ENCODE measurements at regions of chr14 and their contacts with region 1.

Region 1: DNA sequence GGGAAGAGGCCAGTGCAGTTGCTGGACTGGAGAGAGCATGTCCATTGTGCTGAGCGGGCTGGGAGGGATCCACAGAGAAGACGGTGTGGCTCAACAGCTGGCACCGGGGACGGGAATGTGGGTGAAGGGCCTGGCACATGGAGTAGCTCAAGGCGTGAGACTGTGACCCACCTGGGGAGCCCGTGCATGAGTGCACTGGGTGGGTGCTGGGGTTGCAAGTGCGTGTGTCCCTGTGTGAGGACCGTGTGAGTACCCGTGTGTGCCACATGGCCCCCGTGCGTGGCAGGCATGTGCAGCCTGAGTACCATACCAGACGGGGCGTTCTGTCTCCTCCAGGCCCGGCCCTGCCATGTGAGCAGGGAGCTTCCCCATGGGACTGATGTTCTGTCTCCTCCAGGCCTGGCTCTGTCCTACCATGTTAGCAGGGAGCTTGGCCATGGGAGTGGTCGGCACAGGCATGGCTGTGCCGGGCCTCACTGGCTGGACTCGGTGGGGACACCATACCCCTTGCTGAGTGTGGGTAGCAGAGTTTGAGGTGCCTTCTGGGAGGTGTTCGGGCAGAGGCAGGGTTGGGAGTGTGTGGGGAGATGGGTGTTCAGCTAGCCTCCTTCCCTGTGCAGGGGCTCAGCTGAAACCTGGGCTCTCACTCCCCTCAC is 234.4 kb downstream of the TMEM121 start:
- DNase-seq: no peak
- ATAC-seq: no peak
- H3K4me3 ChIP-seq: no peak overlapping the region
- H3K27ac ChIP-seq: no peak overlapping the region
- H3K4me1 ChIP-seq: no peaks in the 10 kb centered on the region
- H3K27me3 ChIP-seq: no peaks in the 10 kb centered on the region; the same call in 1 of the 2 replicates
- CTCF ChIP-seq: no peak
- POLR2A ChIP-seq: no peak
- RAD21 ChIP-seq: no peak

Region 2: DNA sequence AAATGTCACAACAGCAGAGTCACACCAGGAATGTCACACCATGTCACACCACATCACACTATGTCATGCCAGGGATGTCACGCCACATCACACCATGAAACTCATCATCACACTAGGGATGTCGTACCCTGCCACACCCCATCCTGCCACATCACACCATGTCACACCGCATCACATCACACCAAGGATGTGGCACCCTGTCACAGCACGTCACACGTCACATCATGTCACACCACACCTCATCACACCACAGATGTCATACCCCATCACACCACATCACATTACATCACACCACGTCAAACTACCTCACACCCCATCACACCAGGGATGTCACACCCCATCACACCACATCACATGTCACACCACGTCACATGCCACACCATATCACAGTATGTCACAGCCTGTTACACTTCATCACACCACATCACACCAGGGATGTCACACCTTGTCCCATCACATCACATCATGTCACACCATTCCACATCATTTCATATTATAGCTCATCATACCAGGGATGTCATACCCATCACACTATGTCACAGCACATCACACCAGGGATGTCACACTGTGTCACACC is 143.5 kb before region 1 on chr14:
- CTCF ChIA-PET with region 1: no interaction called
- POLR2A ChIA-PET with region 1: no interaction called
- RAD21 ChIA-PET with region 1: no interaction called
- intact Hi-C with region 1: loop called (anchors 2 kb)
- DNase-seq: no peak
- ATAC-seq: peak; percentile 45
- H3K4me3 ChIP-seq: no peak overlapping the region
- H3K27ac ChIP-seq: no peak overlapping the region
- H3K4me1 ChIP-seq: no peaks in the 10 kb centered on the region
- H3K27me3 ChIP-seq: 0 out of 2 replicates have a peak, but pooled peaks cover 2% of the 10 kb centered on the region
- CTCF ChIP-seq: no peak
- POLR2A ChIP-seq: no peak
- RAD21 ChIP-seq: no peak